ENCODE measurements at regions of chr9 and their contacts with region 1.

Region 1: DNA sequence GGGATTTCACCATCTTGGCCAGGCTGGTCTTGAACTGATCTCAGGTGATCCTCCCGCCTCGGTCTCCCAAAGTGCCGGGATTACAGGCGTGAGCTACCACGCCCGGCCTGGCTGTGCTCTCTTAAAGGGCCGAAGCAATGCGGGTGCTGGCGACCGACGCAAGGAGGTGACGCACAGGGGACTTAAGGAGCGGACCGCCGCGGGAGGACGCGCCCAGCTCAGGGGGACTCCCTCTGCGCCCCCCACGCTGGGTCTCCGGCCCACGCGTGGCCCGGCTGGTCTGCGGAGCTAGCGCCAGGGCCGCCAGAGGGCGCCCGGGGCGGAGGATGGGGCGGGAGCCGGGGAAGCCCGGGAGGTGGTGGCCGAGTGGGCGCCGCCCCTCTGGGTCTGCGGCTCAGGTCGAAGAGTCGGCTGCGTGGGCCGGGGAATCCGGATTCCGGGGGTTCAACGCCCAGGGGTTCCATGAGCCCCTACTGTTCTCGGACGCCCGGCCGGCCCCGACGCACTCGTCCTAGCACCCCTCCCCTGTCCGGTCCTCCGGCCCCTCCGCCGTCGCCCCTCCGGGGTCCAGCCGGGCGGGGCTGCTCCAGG is 502 bp upstream of the CERCAM start:
- DNase-seq: peak; percentile 96
- H3K4me3 ChIP-seq: peak overlapping the region; percentile 73 to 86
- H3K27ac ChIP-seq: peak overlapping the region; percentile 59 to 81
- H3K4me1 ChIP-seq: peaks cover 0 to 17% of the 10 kb centered on the region in 2 experiments; a peak in 1 of 4 replicates
- H3K27me3 ChIP-seq: no peaks in the 10 kb centered on the region; the same call in 1 of the 2 replicates
- CTCF ChIP-seq: peak; percentile 87
- EP300 ChIP-seq: no peak; a peak in 1 of 4 replicates
- RAD21 ChIP-seq: peak; percentile 18; the same call in 1 of the 2 replicates

Region 2: GRCh38 chr9:127937388-127938280 is 482.5 kb before region 1 on chr9 and contains the start of gene DPM2:
- CTCF ChIA-PET with region 1: no interaction called
- POLR2A ChIA-PET with region 1: no interaction called
- DNase-seq: peak; percentile 93
- H3K4me3 ChIP-seq: peak within 1 kb of the TSS; percentile 78 to 95
- H3K27ac ChIP-seq: peak within 1 kb of the TSS; percentile 71 to 77
- H3K4me1 ChIP-seq: peaks cover 12 to 44% of the 10 kb centered on the region in 2 experiments
- H3K27me3 ChIP-seq: no peaks in the 10 kb centered on the region
- CTCF ChIP-seq: no peak
- EP300 ChIP-seq: no peak
- RAD21 ChIP-seq: no peak
- polyA plus RNA-seq, gene DPM2: 106 and 117 TPM in 2 replicates

Region 3: GRCh38 chr9:128349125-128349524 is 71.0 kb before region 1 on chr9:
- CTCF ChIA-PET with region 1: interaction called, 12 read pairs
- POLR2A ChIA-PET with region 1: no interaction called
- DNase-seq: no peak
- H3K4me3 ChIP-seq: no peak overlapping the region
- H3K27ac ChIP-seq: no peak overlapping the region
- H3K4me1 ChIP-seq: no peaks in the 10 kb centered on the region
- H3K27me3 ChIP-seq: no peaks in the 10 kb centered on the region
- CTCF ChIP-seq: no peak
- EP300 ChIP-seq: no peak
- RAD21 ChIP-seq: no peak

Region 4: GRCh38 chr9:128361986-128362646 is 58.0 kb before region 1 on chr9:
- CTCF ChIA-PET with region 1: interaction called, 113 read pairs
- POLR2A ChIA-PET with region 1: interaction called, 7 read pairs
- DNase-seq: peak; percentile 92
- H3K4me3 ChIP-seq: peak overlapping the region; percentile 43 to 58
- H3K27ac ChIP-seq: peak overlapping the region; percentile 29 to 72; a peak in 3 of 4 replicates
- H3K4me1 ChIP-seq: peaks cover 7 to 8% of the 10 kb centered on the region in 2 experiments; a peak in 2 of 4 replicates
- H3K27me3 ChIP-seq: no peaks in the 10 kb centered on the region
- CTCF ChIP-seq: peak; percentile 90
- EP300 ChIP-seq: no peak
- RAD21 ChIP-seq: peak; percentile 86

Region 5: GRCh38 chr9:128370826-128371621 is 49.1 kb before region 1 on chr9 and contains the start of gene URM1:
- CTCF ChIA-PET with region 1: interaction called, 35 read pairs
- POLR2A ChIA-PET with region 1: interaction called, 8 read pairs
- DNase-seq: peak; percentile 97
- H3K4me3 ChIP-seq: peak within 1 kb of the TSS; percentile 78 to 87
- H3K27ac ChIP-seq: peak within 1 kb of the TSS; percentile 89 to 91
- H3K4me1 ChIP-seq: peaks cover 0 to 20% of the 10 kb centered on the region in 2 experiments; a peak in 2 of 4 replicates
- H3K27me3 ChIP-seq: no peaks in the 10 kb centered on the region
- CTCF ChIP-seq: peak; percentile 29; the same call in 1 of the 2 replicates
- EP300 ChIP-seq: no peak
- RAD21 ChIP-seq: 0 out of 2 replicates have a peak, but pooled peaks have one; percentile 14
- polyA plus RNA-seq, gene URM1: 58.9 and 61.5 TPM in 2 replicates

Region 6: GRCh38 chr9:128383007-128383753 is 37.0 kb before region 1 on chr9:
- CTCF ChIA-PET with region 1: interaction called, 11 read pairs
- POLR2A ChIA-PET with region 1: interaction called, 5 read pairs
- DNase-seq: no peak
- H3K4me3 ChIP-seq: no peak overlapping the region
- H3K27ac ChIP-seq: peak overlapping the region in 1 of 2 experiments; percentile 29; a peak in 1 of 4 replicates
- H3K4me1 ChIP-seq: peaks cover 0 to 12% of the 10 kb centered on the region in 2 experiments; a peak in 1 of 4 replicates
- H3K27me3 ChIP-seq: no peaks in the 10 kb centered on the region
- CTCF ChIP-seq: no peak
- EP300 ChIP-seq: no peak
- RAD21 ChIP-seq: no peak

Measured in SK-N-SH (cell line).